ENCODE measurements at regions of chr12 and their contacts with region 1.

Region 1: GRCh38 chr12:31297572-31298512 is 28.1 kb downstream of the SINHCAF start:
- DNase-seq: no peak
- ATAC-seq: no peak
- H3K4me3 Mint-ChIP-seq: no peak overlapping the region
- H3K27ac Mint-ChIP-seq: peak overlapping the region; percentile 83
- H3K4me1 Mint-ChIP-seq: peaks cover 26% of the 10 kb centered on the region
- H3K27me3 Mint-ChIP-seq: no peaks in the 10 kb centered on the region

Region 2: GRCh38 chr12:31228811-31229792 is 68.7 kb before region 1 on chr12:
- CTCF ChIA-PET with region 1: no interaction called
- POLR2A ChIA-PET with region 1: no interaction called
- intact Hi-C with region 1: no loop called
- DNase-seq: no peak
- ATAC-seq: no peak
- H3K4me3 Mint-ChIP-seq: no peak overlapping the region
- H3K27ac Mint-ChIP-seq: no peak overlapping the region
- H3K4me1 Mint-ChIP-seq: no peaks in the 10 kb centered on the region
- H3K27me3 Mint-ChIP-seq: peaks cover 2% of the 10 kb centered on the region

Region 3: GRCh38 chr12:31317471-31318395 is 19.9 kb after region 1 on chr12:
- CTCF ChIA-PET with region 1: interaction called, 4 read pairs
- POLR2A ChIA-PET with region 1: no interaction called
- intact Hi-C with region 1: loop called in 1 of 2 experiments (anchors 1 kb)
- DNase-seq: no peak
- ATAC-seq: peak; percentile 14
- H3K4me3 Mint-ChIP-seq: peak overlapping the region; percentile 76
- H3K27ac Mint-ChIP-seq: peak overlapping the region; percentile 95
- H3K4me1 Mint-ChIP-seq: peaks cover 78% of the 10 kb centered on the region
- H3K27me3 Mint-ChIP-seq: no peaks in the 10 kb centered on the region

Region 4: DNA sequence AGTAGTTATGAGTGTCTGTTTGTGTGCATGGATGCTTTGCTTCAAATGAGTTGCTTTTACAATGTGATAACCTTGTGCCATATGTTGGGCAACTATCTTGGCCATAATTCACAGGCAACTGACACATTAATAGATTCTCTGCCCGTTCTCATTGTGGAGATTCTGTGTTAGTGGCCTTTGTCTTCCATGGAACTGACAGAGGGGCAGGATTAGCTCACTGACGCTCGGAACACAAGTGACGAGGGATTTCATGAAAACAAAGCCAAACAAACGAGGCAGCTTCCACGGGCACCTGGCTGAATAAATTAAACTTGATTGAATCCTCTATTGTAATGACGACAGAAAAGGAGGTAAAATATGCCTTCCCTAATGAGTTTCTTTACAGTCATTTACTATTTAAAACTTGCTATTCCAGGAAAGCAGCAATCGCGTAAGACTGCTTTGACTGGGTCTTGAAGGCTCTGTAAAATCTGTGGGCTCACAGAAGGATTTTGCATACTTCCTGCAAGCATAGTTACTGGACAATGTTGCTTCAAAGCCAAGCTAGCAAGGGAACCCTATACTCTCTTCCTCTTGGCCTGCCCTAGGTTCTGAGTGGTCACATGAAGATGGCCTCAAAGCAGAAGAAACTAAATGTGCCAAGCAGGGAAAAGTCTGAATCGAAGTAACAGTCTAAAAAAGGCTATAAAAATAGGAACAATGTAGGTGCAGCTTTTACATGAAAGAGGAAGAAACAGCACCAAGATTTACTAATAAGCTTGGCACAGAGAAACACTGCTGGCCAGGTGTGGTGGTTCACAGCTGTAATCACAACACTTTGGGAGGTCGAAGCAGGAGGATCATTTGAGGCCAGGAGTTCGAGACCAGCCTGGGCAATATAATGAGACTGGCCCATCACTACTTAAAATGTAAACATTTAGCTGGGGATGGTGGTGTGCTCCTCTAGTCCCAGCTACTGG is 56.2 kb after region 1 on chr12:
- CTCF ChIA-PET with region 1: no interaction called
- POLR2A ChIA-PET with region 1: no interaction called
- intact Hi-C with region 1: no loop called
- DNase-seq: no peak
- ATAC-seq: no peak
- H3K4me3 Mint-ChIP-seq: no peak overlapping the region
- H3K27ac Mint-ChIP-seq: no peak overlapping the region
- H3K4me1 Mint-ChIP-seq: no peaks in the 10 kb centered on the region
- H3K27me3 Mint-ChIP-seq: no peaks in the 10 kb centered on the region

Measured in activated CD4-positive, alpha-beta T cell treated with anti-CD3 and anti-CD28 coated beads for 36 hours (primary cell).